ENCODE measurements at regions of chr15 and their contacts with region 1.

Region 1: GRCh38 chr15:71830981-71831380 is 20.6 kb downstream of the NR2E3 start:
- DNase-seq: no peak

Region 2: DNA sequence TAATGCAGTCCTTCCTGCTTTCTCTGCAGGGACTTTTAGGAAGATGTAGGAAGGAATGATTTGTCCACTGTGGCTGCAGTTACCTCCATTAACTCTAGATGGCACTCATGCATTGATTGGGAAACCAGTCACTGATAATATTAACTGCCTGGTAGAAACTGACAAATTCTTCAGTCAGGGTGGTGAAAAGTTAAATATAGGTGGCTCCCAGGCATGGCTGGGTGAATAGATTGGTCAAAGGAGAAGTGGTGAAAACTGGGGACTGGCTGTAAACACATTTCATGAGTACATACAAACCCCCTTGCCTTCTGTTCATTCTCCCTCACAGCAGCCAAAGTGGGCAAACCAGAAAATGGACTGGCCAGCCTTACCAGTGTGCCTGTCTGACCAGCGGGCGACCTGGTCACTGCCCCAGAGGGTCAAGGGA is 382.3 kb before region 1 on chr15:
- intact Hi-C with region 1: no loop called
- DNase-seq: no peak

Region 3: GRCh38 chr15:71761649-71762369 is 69.2 kb before region 1 on chr15:
- intact Hi-C with region 1: no loop called
- DNase-seq: no peak

Region 4: DNA sequence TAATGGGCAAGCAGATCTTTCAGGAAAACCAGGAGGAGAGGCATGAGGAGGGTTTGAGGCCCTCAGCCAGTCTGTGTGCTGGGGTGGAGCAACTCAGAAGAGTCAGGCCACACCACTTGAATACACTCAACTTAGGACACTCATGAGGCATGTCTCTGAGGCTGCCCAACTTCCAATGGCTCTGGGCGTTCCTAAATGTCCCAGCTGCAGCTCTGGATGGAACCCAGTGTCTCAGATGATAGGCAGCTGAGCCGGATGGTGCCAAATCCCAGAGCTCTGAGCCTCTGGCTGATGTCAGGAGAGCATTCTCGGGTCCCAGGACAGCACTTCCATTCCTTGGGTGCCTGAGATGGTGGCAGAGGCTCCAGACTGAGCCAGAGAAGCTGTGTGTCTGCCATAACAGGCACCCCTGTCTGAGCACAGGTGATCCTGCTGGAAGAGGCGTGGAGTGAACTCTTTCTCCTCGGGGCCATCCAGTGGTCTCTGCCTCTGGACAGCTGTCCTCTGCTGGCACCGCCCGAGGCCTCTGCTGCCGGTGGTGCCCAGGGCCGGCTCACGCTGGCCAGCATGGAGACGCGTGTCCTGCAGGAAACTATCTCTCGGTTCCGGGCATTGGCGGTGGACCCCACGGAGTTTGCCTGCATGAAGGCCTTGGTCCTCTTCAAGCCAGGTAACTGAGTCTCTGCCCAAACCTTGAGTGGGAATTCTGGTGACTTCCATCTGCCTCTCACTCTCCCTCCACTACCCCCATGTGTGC is 17.8 kb before region 1 on chr15:
- intact Hi-C with region 1: loop called in 1 of 2 experiments (anchors 1 kb)
- DNase-seq: no peak

Region 5: DNA sequence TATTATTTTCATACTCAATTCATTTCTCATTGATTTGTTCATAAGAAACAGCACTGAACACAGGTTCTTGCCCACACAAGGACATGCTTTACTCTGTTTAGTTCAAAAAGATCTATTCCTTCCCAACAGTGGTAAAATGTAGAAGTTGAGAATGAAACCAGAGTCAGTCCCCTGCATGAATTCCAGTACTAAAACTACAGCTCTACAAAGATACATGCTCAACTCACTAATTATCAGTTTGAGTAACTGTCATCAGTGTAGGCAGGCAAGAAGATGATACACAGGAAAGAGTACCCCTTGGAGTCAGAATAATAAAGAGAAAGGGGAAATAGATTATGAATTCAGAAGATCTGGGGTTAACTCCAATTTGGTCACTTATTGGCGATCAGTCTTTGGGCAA is 22.6 kb after region 1 on chr15:
- intact Hi-C with region 1: loop called in 1 of 2 experiments (anchors 1 kb)
- DNase-seq: no peak